Activated B cell treated with CpG ODN at 0.5 μM for 24 hours (primary cell): ENCODE measurements at regions of chr7 and their contacts with region 1.

Region 1: DNA sequence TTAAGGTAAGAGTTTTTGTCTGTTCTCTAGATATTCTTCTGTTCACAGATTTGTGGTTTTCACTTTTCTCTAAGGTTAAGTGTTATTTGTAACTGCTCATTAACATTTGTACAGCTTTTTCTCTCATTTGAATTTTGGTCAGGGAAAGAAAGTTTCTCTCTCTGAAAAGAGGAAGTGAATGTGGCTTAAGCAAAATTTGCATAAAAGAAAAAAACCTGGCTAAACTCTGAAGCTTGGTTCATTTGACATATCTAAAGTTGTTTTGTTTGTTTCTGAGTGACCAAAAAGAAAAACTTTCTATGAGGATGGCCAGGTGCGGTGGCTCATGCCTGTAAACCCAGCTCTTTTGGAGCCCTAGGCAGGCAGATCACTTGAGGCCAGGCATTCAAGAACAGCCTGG is 22.0 kb upstream of the SLC26A4 start:
- DNase-seq: no peak
- ATAC-seq: peak; percentile 77
- H3K4me3 Mint-ChIP-seq: peak overlapping the region; percentile 75
- H3K27ac Mint-ChIP-seq: peak overlapping the region; percentile 95
- H3K4me1 Mint-ChIP-seq: peaks cover 65% of the 10 kb centered on the region
- H3K27me3 Mint-ChIP-seq: no peaks in the 10 kb centered on the region
- CTCF ChIP-seq: no peak

Region 2: GRCh38 chr7:106071356-106071998 is 1567.1 kb before region 1 on chr7:
- CTCF ChIA-PET with region 1: no interaction called
- POLR2A ChIA-PET with region 1: no interaction called
- intact Hi-C with region 1: loop called (anchors 10 kb)
- DNase-seq: peak; percentile 57
- ATAC-seq: peak; percentile 87
- H3K4me3 Mint-ChIP-seq: peak overlapping the region; percentile 73
- H3K27ac Mint-ChIP-seq: peak overlapping the region; percentile 98
- H3K4me1 Mint-ChIP-seq: peaks cover 100% of the 10 kb centered on the region
- H3K27me3 Mint-ChIP-seq: no peaks in the 10 kb centered on the region
- CTCF ChIP-seq: no peak

Region 3: GRCh38 chr7:107563775-107564552 is 74.6 kb before region 1 on chr7 and contains the starts of genes COG5 and DUS4L:
- CTCF ChIA-PET with region 1: no interaction called
- POLR2A ChIA-PET with region 1: interaction called, 6 read pairs
- intact Hi-C with region 1: loop called (anchors 5 kb)
- DNase-seq: peak; percentile 83
- ATAC-seq: peak; percentile 93
- H3K4me3 Mint-ChIP-seq: peak within 1 kb of the TSS; percentile 93
- H3K27ac Mint-ChIP-seq: peak within 1 kb of the TSS; percentile 82
- H3K4me1 Mint-ChIP-seq: peaks cover 43% of the 10 kb centered on the region
- H3K27me3 Mint-ChIP-seq: no peaks in the 10 kb centered on the region
- CTCF ChIP-seq: no peak
- total RNA-seq, gene COG5: 40.6 and 47.0 TPM in 2 replicates
- total RNA-seq, gene DUS4L: 11.0 and 14.6 TPM in 2 replicates

Region 4: DNA sequence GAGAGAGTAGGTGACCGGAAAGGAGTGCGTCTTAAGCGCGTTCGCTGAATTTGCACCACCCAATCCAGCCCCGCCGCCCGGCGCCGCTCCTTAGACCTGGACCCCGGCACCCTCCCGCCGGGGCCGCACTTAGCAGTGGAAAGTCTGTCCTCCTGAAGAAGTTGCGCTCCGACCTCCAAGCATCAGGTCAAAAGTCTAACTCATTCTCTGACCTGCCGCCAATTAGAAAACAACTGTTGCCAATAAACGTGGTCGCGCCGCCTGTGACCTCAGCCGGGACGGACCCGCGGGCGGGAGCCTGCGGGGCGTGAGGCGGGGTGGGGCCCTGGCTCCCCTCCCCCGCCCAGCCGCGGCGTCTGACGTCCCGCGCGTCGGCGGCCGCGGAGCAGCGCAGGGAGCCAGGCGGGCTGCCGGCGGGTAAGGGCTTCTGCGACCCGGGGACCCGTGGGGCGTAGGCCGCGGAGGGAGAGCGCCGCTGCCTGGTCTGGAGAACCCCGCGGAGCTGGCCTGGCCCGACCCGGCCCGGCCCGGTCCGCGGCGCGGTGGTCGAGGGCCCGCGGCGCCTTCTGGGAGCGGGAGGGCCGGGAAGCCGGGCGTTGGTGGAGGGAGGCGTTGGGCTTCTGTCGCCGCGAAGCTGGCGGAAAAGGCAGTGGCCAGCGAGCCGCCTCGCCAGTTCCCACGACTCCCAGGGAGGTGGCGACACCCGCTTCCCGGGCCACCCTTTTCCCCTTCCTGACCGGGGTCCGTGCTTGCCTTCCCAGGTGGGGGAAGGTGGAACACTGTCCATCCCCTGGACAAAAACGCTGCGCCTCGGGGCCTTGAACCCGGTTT is 58.5 kb before region 1 on chr7 and contains the start of gene BCAP29:
- CTCF ChIA-PET with region 1: no interaction called
- POLR2A ChIA-PET with region 1: interaction called, 4 read pairs
- intact Hi-C with region 1: loop called (anchors 1 kb)
- DNase-seq: peak; percentile 81
- ATAC-seq: peak; percentile 98
- H3K4me3 Mint-ChIP-seq: peak within 1 kb of the TSS; percentile 95
- H3K27ac Mint-ChIP-seq: peak within 1 kb of the TSS; percentile 90
- H3K4me1 Mint-ChIP-seq: peaks cover 23% of the 10 kb centered on the region
- H3K27me3 Mint-ChIP-seq: no peaks in the 10 kb centered on the region
- CTCF ChIP-seq: no peak
- total RNA-seq, gene BCAP29: 23.9 and 24.9 TPM in 2 replicates

Region 5: GRCh38 chr7:107628461-107629064 is 10.0 kb before region 1 on chr7:
- CTCF ChIA-PET with region 1: no interaction called
- POLR2A ChIA-PET with region 1: interaction called, 3 read pairs
- intact Hi-C with region 1: loop called (anchors 1 kb)
- DNase-seq: no peak
- ATAC-seq: peak; percentile 90
- H3K4me3 Mint-ChIP-seq: peak overlapping the region; percentile 24
- H3K27ac Mint-ChIP-seq: peak overlapping the region; percentile 50
- H3K4me1 Mint-ChIP-seq: peaks cover 35% of the 10 kb centered on the region
- H3K27me3 Mint-ChIP-seq: no peaks in the 10 kb centered on the region
- CTCF ChIP-seq: no peak